ENCODE measurements at regions of chr11 and their contacts with region 1.

Region 1: DNA sequence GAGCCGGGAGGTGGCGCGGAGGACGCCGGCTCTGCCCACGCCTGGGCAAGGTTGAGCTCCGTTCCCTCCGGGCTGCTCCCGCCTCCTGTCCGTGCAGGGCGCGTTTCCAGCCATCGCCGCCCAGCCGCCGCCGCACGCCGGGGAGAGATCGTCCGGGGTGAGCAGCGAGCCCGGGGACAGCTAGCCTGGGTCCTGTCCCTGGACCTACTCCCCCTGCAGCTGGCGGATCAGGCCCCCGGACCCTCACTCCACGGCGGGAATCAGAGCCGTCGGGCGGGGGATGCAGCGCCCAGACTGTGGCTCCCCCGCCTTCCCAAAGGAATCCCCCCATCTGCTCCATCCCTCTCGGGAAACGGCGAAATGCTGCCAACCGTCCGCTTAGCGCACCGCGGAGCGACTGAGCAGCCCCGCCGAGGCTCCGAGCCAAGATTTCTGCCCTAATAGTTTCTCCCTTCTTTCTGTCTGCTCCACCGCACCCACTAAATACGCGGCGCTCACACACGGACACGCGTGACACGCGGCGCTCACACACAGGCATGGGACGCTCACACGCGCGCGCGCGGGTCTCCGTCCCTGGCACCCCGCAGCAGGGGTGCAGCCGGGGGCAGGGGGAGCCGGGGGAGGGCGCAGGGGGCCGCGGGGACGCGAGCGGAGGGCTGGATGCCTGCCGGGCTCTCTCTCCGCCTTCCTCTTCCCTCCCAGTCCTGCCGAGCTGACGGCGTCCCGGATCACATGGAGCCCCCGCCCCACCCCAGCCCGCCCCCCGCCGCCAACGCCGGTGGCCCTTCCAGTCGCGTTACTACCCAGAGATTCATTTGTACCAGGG is at the start of gene KCNJ5:
- DNase-seq: no peak
- H3K4me3 Mint-ChIP-seq: peak within 1 kb of the TSS; percentile 63
- H3K27ac Mint-ChIP-seq: no peak within 1 kb of the TSS
- H3K4me1 Mint-ChIP-seq: peaks cover 3% of the 10 kb centered on the region
- H3K27me3 Mint-ChIP-seq: peaks cover 38% of the 10 kb centered on the region
- total RNA-seq, gene KCNJ5: not detected

Region 2: DNA sequence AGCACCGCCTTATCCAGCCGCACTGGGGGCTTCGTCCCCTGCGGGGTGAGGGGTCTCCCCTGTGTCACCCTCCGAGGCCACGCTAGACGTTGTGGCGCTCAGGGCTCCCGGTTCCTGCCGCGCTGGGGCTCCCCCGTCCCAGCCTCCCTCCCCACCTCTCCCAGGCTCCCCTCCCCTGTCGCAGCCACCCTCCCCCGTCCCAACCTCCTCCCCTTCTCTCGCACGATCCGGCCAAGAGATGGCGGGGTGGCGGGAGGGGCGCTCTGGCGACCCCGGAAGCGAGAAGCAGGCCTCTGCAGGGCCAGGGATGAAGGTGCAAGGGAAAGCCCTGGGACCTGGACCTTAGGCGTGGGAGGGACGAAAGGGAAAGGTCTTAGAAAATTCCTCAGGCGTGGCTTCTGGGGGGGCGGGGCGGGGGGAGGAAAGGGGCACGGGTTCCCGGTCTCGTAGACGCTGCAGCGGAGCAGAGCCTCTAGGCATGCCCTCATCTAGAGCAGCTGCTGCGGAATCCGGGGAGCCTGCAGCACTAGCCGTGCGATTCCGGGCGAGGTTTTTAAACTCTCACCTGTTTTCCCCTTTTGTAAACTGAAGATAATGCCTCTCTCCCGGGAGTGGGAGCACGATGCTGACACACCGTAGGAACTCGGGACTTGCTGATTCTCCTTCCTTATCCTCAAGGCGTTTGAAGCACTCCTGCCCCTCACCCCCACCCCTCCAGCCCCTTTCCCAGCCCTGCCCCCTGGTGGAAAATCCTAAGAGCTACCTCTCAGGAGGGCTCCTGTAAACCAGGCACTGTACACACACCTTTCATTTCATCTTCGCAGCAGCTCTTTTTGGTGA is 14.8 kb after region 1 on chr11:
- CTCF ChIA-PET with region 1: interaction called, 79 read pairs
- POLR2A ChIA-PET with region 1: no interaction called
- intact Hi-C with region 1: no loop called
- DNase-seq: peak; percentile 61
- H3K4me3 Mint-ChIP-seq: peak overlapping the region; percentile 71
- H3K27ac Mint-ChIP-seq: no peak overlapping the region
- H3K4me1 Mint-ChIP-seq: peaks cover 15% of the 10 kb centered on the region
- H3K27me3 Mint-ChIP-seq: peaks cover 39% of the 10 kb centered on the region

Measured in activated CD4-positive, alpha-beta memory T cell treated with anti-CD3 and anti-CD28 coated beads for 36 hours (primary cell).